ENCODE measurements at regions of chr22 and their contacts with region 1.

Region 1: GRCh38 chr22:42662114-42663021 is 13.2 kb upstream of the CYB5R3 start:
- DNase-seq: peak; percentile 80 to 89
- H3K4me3 ChIP-seq: peak overlapping the region; percentile 51 to 55
- H3K27ac ChIP-seq: peak overlapping the region; percentile 48 to 69
- H3K4me1 ChIP-seq: peaks cover 0 to 15% (median 10%) of the 10 kb centered on the region in 4 donors
- H3K27me3 ChIP-seq: no peaks in the 10 kb centered on the region
- CTCF ChIP-seq: peak; percentile 78 to 86

Region 2: DNA sequence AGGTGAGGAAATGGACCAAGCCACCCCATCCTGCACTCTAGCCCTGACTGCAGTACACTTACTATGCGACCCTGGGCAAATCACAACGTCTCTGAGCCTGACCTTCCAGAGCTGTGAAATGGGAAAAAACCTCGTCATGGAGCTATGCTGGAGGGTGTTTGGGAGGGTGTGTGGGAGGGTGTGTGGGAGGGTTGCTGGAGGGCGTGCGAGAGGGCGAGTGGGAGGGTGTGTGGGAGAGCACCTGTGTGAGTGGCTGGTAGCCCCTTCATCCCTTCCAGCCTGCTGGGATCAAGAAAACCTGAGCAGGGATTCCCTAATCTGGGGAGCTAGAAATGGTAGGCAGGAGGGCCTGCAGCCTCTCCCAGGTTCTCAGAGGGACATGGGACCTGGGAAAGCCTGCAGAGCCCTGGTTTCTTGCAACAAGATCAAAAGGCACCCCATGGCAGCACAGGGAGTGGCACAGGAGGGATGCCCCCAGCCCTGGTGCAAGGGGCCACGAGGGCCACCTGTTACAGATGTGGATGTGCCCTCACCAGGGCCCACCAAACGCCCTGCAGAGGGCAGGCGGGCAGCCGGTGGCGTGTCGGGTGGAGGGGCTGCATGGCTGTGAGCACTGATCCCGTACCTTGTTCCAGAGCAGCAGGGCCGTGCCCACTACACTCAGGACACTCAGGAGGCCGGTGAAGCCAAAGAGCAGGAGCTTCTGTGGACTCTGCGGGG is 253.4 kb before region 1 on chr22:
- intact Hi-C with region 1: no loop called
- DNase-seq: no peak
- H3K4me3 ChIP-seq: no peak overlapping the region
- H3K27ac ChIP-seq: no peak overlapping the region
- H3K4me1 ChIP-seq: no peaks in the 10 kb centered on the region
- H3K27me3 ChIP-seq: peaks cover 0 to 26% of the 10 kb centered on the region in 2 donors
- CTCF ChIP-seq: no peak

Region 3: GRCh38 chr22:42717197-42717928 is 55.0 kb after region 1 on chr22:
- intact Hi-C with region 1: loop called (anchors 5 kb)
- DNase-seq: no peak
- H3K4me3 ChIP-seq: no peak overlapping the region
- H3K27ac ChIP-seq: peak overlapping the region; percentile 38 to 94
- H3K4me1 ChIP-seq: peaks cover 0 to 72% (median 37%) of the 10 kb centered on the region in 4 donors
- H3K27me3 ChIP-seq: no peaks in the 10 kb centered on the region
- CTCF ChIP-seq: no peak

Region 4: DNA sequence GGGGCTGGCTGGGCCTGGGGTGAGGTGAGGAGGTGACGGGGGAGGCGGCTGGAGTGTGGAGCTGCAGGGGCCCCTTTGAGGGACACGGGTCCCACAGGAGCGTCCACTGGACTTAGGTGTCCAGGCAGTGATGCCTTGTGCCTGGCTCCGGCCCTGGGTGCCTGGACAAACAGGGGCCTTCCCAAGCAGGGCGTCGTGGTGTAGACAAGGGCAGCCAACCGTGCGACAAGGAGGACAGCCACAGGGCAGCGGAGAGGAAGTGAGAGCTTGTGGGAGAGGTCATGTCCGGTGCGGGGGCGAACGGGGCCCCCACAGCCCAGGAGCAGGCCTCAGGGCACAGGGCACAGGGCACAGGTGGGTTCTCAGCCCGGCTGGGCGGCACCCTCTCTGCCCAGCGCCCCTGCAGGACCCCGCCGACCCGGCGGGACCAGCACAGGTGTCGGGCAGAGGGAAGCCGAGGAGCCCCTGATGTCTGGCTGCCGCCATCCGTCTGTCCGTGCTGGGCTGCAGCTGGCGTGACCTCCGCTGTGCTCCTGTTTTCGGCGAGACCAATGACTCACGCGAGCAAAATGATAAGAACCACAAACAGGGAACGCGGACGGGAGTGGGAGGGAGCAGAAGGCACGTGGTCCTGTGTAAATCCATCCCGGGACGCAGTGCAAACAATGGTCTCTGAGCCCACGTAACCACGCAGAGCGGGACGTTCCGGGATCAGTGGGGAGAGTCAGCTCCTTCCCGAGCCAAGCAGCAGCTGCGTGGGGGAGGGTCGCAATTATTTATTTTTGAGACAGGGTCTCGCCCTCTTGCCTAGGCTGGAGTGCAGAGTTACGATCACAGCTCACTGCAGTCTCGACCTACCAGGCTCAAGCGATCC is 107.4 kb after region 1 on chr22:
- intact Hi-C with region 1: loop called (anchors 10 kb)
- DNase-seq: peak; percentile 66 to 85
- H3K4me3 ChIP-seq: peak overlapping the region; percentile 8 to 27
- H3K27ac ChIP-seq: no peak overlapping the region
- H3K4me1 ChIP-seq: peaks cover 0 to 11% (median 5%) of the 10 kb centered on the region in 4 donors
- H3K27me3 ChIP-seq: no peaks in the 10 kb centered on the region
- CTCF ChIP-seq: no peak